GM23248 (cell line): ENCODE measurements at regions of chr7 and their contacts with region 1.

Region 1: DNA sequence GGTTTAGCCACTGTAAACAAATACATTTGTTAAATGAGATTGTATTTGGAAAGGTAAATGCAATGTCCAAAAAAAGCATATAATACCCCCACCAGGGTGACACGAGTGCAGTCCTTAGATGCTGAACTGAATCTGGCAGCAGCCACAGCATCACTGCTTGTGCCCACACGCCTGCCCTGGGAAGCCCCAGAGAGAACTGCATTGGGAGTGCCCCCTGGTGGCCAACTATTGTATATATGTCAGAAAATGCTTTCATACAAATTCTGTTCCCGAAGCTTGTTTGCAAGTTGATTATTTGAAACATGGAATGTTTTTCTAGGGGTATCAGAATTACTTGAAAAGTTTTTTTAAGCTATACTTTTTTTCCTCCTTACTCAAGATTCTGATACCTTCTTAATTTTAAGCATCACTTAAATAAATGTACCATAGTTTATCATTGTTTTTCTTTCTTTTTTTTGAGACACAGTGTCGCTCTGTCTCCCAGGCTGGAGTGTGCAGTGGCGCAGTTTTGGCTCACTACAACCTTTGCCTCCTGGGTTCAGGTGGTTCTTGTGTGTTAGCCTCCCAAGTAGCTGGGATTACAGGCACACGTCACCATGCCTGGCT is 50.1 kb downstream of the LANCL2 start:
- DNase-seq: peak; percentile 91
- H3K4me3 ChIP-seq: no peak overlapping the region
- H3K27ac ChIP-seq: no peak overlapping the region
- H3K4me1 ChIP-seq: peaks cover 1% of the 10 kb centered on the region; the same call in 1 of the 2 replicates
- H3K27me3 ChIP-seq: no peaks in the 10 kb centered on the region

Region 2: GRCh38 chr7:54773472-54774399 is 641.5 kb before region 1 on chr7:
- in situ Hi-C with region 1: loop called (anchors 10 kb)
- DNase-seq: peak; percentile 90
- H3K4me3 ChIP-seq: peak overlapping the region; percentile 93
- H3K27ac ChIP-seq: no peak overlapping the region
- H3K4me1 ChIP-seq: peaks cover 7% of the 10 kb centered on the region; the same call in 1 of the 2 replicates
- H3K27me3 ChIP-seq: no peaks in the 10 kb centered on the region